Posterior cingulate gyrus (tissue), 11 donors: ENCODE measurements at regions of chrX and their contacts with region 1.

Region 1: GRCh38 chrX:47193475-47194193 is at the start of gene UBA1:
- DNase-seq: peak; percentile 88 to 99 (median 96)

Region 2: GRCh38 chrX:47217642-47218279 is 24.1 kb after region 1 on chrX:
- intact Hi-C with region 1: loop called (anchors 1 kb)
- DNase-seq: peak; percentile 87 to 99 (median 94)

Region 3: GRCh38 chrX:47250017-47250347 is 56.3 kb after region 1 on chrX:
- intact Hi-C with region 1: no loop called
- DNase-seq: no peak